ENCODE measurements at regions of chr7 and their contacts with region 1.

Region 1: DNA sequence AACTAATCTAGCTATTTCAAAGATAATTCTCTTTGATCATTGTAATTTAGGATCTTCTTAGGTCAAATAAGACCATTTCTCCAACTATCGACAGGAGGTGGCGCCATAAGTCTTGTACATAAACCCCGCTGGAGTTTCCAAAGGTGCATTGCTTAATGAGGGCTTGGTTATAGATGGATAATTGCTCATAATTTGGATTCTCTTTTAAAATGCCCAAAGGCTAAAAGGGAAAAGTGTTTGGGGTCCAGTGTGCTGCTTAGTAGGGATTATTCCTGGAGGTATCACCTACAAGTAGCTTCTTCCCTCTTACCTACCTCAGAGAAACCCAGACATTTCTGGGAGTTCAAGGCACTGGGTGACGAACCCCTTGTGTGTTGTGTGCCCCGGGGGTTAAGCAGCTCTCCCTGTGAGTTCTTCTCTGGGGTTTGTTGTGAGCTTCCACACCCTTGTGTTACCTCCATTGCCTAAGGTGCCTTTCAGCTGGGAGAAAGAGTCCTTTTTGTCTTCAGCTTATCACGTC is 75.2 kb downstream of the PAXIP1 start:
- DNase-seq: peak; percentile 87
- H3K4me3 Mint-ChIP-seq: peak overlapping the region; percentile 90
- H3K27ac Mint-ChIP-seq: peak overlapping the region; percentile 97
- H3K4me1 Mint-ChIP-seq: peaks cover 22% of the 10 kb centered on the region
- H3K27me3 Mint-ChIP-seq: peaks cover 8% of the 10 kb centered on the region

Region 2: DNA sequence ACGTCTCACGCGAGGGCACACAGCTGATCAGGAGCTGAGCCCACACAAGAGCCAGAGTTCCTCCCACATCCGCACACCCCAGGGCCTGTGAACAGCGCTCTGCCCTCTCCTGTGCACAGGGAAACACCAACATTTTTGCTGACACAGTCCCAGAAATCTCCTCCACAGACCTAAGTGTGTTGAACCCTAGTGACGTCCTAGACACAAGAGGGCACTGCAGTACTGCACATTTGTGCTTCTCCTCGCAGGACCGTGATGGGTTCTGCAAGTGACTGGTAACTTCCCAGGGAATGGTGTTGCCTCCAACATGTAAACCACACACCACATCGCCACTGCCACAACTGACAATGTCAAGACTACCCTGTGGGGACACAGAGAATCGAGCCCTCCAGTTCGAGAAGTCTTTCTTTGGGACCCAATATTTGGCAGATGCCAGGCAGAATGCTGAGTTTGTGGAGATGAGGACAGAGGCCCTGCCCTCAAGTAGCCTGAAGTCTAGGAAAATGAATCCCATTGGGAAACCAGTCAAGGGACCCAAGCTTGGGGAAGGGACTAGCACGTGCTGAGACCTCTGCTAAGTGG is 95.0 kb before region 1 on chr7:
- CTCF ChIA-PET with region 1: no interaction called
- DNase-seq: no peak
- H3K4me3 Mint-ChIP-seq: no peak overlapping the region
- H3K27ac Mint-ChIP-seq: no peak overlapping the region
- H3K4me1 Mint-ChIP-seq: no peaks in the 10 kb centered on the region
- H3K27me3 Mint-ChIP-seq: peaks cover 6% of the 10 kb centered on the region

Region 3: GRCh38 chr7:154913638-154914312 is 13.9 kb before region 1 on chr7:
- CTCF ChIA-PET with region 1: interaction called, 16 read pairs
- DNase-seq: peak; percentile 91
- H3K4me3 Mint-ChIP-seq: peak overlapping the region; percentile 57
- H3K27ac Mint-ChIP-seq: no peak overlapping the region
- H3K4me1 Mint-ChIP-seq: peaks cover 4% of the 10 kb centered on the region
- H3K27me3 Mint-ChIP-seq: peaks cover 34% of the 10 kb centered on the region

Region 4: DNA sequence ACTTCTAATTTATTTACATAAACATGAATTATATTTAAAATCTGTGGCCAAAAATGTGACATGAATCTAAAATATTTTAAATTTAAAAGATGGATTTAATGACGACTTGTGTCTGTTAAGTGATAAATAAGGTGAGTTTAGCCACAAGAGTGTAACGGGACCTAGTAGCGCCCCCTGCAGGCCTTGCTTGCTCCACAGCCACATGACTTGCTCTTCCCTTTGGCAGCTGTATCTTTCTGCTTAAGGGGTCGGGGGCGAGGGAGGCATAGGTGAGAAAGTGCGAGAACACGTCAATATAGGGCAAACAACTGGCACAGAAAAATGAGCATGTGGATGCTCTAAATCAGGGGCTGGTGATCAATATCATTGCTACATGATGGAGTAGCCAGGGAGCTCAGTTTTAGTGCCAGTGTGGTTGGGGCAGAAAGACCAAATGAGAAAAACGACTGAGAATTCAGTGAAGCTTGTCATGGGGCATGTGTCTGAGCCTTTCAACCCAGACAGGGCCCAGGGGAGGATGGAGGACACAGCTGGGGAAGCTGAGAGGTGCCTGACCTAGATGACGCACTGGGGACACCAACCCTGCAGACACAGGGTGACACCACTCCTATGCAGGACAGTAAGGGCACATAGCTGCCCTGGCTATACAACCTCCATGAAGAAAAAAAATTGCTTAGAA is 25.5 kb after region 1 on chr7:
- CTCF ChIA-PET with region 1: interaction called, 29 read pairs
- DNase-seq: peak; percentile 77
- H3K4me3 Mint-ChIP-seq: no peak overlapping the region
- H3K27ac Mint-ChIP-seq: no peak overlapping the region
- H3K4me1 Mint-ChIP-seq: no peaks in the 10 kb centered on the region
- H3K27me3 Mint-ChIP-seq: no peaks in the 10 kb centered on the region

Region 5: DNA sequence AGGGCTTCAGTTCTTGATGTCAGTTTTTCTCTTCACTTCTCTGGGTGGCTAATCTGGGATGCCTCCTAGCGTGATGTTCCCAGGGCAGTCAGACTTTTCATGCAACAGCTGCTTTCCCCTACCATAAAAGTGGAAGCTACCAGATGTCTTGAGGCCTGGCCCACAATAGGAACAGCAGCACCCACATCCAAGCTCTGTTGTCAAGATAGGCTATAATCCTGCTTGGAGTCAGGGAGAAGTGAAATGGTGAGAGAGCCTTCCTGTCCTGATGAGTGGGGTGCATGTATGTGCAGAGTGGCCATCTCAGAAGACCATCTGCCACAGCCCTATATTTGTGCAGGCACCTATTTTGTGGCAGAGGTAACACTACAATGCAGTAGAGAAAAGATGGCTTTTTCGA is 250.4 kb after region 1 on chr7:
- CTCF ChIA-PET with region 1: no interaction called
- DNase-seq: no peak
- H3K4me3 Mint-ChIP-seq: no peak overlapping the region
- H3K27ac Mint-ChIP-seq: no peak overlapping the region
- H3K4me1 Mint-ChIP-seq: no peaks in the 10 kb centered on the region
- H3K27me3 Mint-ChIP-seq: peaks cover 19% of the 10 kb centered on the region

Region 6: GRCh38 chr7:155190688-155191087 is 263.0 kb after region 1 on chr7:
- CTCF ChIA-PET with region 1: interaction called, 13 read pairs
- DNase-seq: peak; percentile 62
- H3K4me3 Mint-ChIP-seq: no peak overlapping the region
- H3K27ac Mint-ChIP-seq: no peak overlapping the region
- H3K4me1 Mint-ChIP-seq: peaks cover 9% of the 10 kb centered on the region
- H3K27me3 Mint-ChIP-seq: peaks cover 48% of the 10 kb centered on the region

Region 7: GRCh38 chr7:155356323-155357105 is 428.8 kb after region 1 on chr7:
- CTCF ChIA-PET with region 1: interaction called, 17 read pairs
- DNase-seq: no peak
- H3K4me3 Mint-ChIP-seq: no peak overlapping the region
- H3K27ac Mint-ChIP-seq: no peak overlapping the region
- H3K4me1 Mint-ChIP-seq: no peaks in the 10 kb centered on the region
- H3K27me3 Mint-ChIP-seq: peaks cover 39% of the 10 kb centered on the region